Activated T-helper 1 cell treated with anti-CD3 and anti-CD28 coated beads, Interleukin-12 subunit alpha, Interleukin-12 subunit beta, Interleukin-2, Interleukin-4 antibody, amounts not matched to agents 30 ng/mL and 10 ng/mL and 1 ng/mL, durations not matched to agents 14 hours and 24 hours and 36 hours (primary cell): ENCODE measurements at regions of chr18 and their contacts with region 1.

Region 1: DNA sequence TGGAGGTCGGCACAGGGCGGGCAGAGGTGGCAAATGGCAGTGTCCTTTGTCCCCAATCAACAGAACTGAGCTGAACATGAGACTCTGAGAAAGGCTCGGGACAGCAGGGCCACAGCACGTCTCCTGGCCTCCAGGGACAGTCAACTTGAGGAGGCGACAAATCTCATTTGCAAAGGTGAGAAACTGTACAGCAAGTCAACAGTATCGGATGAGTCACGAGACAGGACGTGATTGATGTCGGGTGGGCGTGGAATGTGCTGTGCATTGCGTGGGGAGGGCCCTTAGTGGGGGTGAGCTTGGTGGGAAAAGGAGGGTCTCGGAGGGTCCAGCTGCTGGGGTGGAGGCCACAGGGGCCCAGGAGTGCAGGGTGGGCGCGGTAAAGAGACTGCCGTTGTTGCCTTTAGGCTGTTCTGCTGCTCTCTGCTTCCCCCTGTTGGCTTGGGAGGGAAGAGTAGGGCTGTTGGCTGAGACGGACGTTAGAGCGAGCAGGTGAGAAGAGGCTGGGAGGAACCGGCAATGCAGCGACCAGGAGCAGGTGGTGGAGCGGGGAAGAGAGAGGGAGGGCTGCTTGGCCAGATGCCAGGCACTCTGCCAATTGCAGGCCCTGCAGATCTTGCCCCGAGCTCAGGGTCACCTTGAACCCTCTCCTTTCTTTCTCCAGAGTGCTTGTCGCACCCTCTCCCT is 164.3 kb downstream of the BCL2 start:
- DNase-seq: peak; percentile 72
- H3K4me3 Mint-ChIP-seq: peak overlapping the region; percentile 79
- H3K27ac Mint-ChIP-seq: peak overlapping the region; percentile 88
- H3K4me1 Mint-ChIP-seq: peaks cover 99% of the 10 kb centered on the region
- H3K27me3 Mint-ChIP-seq: no peaks in the 10 kb centered on the region

Region 2: GRCh38 chr18:62505669-62506494 is 649.4 kb before region 1 on chr18:
- intact Hi-C with region 1: loop called (anchors 5 kb)
- DNase-seq: peak; percentile 25
- H3K4me3 Mint-ChIP-seq: peak overlapping the region; percentile 81
- H3K27ac Mint-ChIP-seq: peak overlapping the region; percentile 96
- H3K4me1 Mint-ChIP-seq: peaks cover 23% of the 10 kb centered on the region
- H3K27me3 Mint-ChIP-seq: peaks cover 2% of the 10 kb centered on the region

Region 3: GRCh38 chr18:63105636-63106316 is 49.5 kb before region 1 on chr18:
- intact Hi-C with region 1: loop called (anchors 1 kb)
- DNase-seq: no peak
- H3K4me3 Mint-ChIP-seq: no peak overlapping the region
- H3K27ac Mint-ChIP-seq: no peak overlapping the region
- H3K4me1 Mint-ChIP-seq: peaks cover 37% of the 10 kb centered on the region
- H3K27me3 Mint-ChIP-seq: peaks cover 20% of the 10 kb centered on the region

Region 4: DNA sequence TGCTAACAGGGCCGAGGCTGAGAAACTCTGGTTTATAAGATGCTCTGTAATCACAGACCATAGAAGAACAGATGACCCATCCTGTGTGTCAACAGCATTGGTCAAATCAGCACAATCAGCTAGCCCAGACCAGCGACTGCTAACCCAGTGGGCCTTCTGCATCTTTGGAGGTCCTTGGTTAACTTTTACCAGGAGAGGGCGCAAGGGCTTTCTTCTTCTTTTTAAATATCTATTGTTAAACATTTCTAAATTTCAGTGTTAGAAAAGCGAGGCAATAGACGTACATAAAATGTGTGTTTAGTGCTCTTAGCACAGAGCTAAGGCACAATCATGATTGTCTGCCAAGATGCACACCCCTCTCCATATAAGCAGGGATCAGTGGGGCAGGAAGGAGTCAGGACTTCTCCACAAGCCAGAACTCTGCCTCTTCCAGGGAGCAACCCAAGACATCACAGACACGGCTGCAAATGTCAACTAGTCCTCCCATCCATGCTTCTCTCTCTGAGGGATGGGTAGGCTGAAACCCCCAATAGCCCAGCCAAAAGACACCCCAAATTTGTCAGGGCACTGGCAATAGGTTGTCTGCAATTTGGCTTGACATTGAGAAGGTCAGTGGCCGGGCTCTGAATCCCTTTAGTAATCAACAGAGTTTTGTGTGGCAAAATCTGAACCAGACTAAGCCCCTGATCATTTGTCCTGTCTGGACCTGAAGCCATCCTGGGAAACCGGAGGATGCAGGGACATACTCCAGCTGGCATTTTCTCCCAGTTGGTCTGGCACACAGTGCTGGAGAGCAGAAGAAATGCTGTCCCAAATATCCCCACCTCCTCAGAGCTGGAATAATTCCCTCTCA is 24.0 kb before region 1 on chr18:
- intact Hi-C with region 1: loop called (anchors 1 kb)
- DNase-seq: peak; percentile 24
- H3K4me3 Mint-ChIP-seq: no peak overlapping the region
- H3K27ac Mint-ChIP-seq: peak overlapping the region; percentile 18
- H3K4me1 Mint-ChIP-seq: peaks cover 31% of the 10 kb centered on the region
- H3K27me3 Mint-ChIP-seq: no peaks in the 10 kb centered on the region

Region 5: DNA sequence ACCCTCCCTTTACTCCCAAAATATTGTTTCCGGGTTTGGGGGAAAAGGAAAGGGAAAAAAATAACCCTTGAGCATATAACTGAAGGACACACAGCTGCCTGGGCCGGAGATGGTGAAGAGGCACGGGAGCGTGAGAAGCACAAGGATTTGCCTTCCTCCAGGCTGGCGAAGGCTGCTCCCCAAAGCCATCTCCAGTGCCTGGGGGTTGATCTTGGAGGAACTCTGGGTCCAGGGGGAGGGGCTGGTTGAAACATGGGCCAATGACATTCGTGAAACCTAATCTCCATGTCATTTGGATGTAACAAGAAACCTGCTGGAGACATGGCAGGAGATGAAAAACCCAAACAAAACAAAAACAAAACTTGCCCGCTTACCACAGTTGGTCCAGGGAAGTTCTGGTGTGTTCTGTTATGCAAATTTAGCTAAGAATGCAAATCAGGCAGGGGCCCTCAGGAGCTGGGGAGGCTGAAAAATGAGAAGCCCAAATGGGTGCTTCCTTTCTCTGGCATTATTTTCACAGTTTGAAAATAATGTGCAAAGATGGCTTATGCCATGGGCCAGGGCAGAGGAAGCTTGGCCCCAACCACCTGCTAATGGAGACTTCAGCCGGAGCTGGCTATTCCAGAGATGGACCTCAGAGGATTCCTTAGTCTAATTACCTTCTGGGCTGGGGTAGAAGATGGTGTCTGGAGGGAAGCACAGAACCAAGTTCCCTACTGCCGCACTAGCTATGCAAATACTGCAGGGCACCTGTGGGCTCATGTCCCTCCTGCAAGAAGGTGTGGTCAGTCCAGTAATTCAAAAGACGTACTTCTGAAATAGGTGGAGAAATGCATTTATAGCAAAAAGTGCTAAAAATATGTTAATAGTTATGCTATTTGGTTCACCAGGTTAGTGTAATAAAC is 16.6 kb before region 1 on chr18:
- intact Hi-C with region 1: loop called (anchors 1 kb)
- DNase-seq: no peak
- H3K4me3 Mint-ChIP-seq: peak overlapping the region; percentile 73
- H3K27ac Mint-ChIP-seq: peak overlapping the region; percentile 90
- H3K4me1 Mint-ChIP-seq: peaks cover 71% of the 10 kb centered on the region
- H3K27me3 Mint-ChIP-seq: no peaks in the 10 kb centered on the region

Region 6: GRCh38 chr18:63299837-63300745 is 144.8 kb after region 1 on chr18:
- intact Hi-C with region 1: loop called (anchors 1 kb)
- DNase-seq: no peak
- H3K4me3 Mint-ChIP-seq: peak overlapping the region; percentile 76
- H3K27ac Mint-ChIP-seq: peak overlapping the region; percentile 96
- H3K4me1 Mint-ChIP-seq: peaks cover 91% of the 10 kb centered on the region
- H3K27me3 Mint-ChIP-seq: no peaks in the 10 kb centered on the region